Sciatic nerve (tissue), 2 donors: ENCODE measurements at regions of chr7 and their contacts with region 1.

Region 1: GRCh38 chr7:95312561-95312960 is 11.8 kb downstream of the PON1 start:
- DNase-seq: no peak
- ATAC-seq: no peak

Region 2: DNA sequence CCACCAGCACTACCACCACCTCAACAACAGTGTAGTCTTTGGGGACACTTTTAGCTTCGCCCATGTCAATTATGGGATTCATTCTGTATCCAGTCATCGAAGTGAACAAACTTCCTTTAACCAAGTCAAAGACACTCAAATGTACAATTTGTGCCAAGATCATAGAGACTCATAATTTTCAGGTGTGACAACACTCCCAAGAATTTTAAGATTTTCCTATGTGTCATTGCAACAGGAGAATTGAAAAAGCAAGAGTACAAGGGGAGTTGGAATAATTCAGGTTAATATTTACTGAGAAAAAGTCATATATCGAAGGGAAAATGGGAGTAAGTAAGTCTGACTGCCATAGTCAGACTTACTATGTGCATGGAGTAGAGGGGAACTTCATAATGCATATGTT is 14.5 kb before region 1 on chr7:
- intact Hi-C with region 1: loop called (anchors 2 kb)
- DNase-seq: no peak
- ATAC-seq: no peak